Activated CD8-positive, alpha-beta memory T cell treated with anti-CD3 and anti-CD28 coated beads, Interleukin-2, amount 10 ng/mL, durations not matched to agents 7 days and 5 days (primary cell): ENCODE measurements at regions of chr15 and their contacts with region 1.

Region 1: GRCh38 chr15:89057504-89058133 is 30.6 kb upstream of the ABHD2 start:
- DNase-seq: peak; percentile 84
- ATAC-seq: peak; percentile 93
- H3K4me3 Mint-ChIP-seq: no peak overlapping the region
- H3K27ac Mint-ChIP-seq: no peak overlapping the region
- H3K4me1 Mint-ChIP-seq: peaks cover 6% of the 10 kb centered on the region
- H3K27me3 Mint-ChIP-seq: peaks cover 11% of the 10 kb centered on the region

Region 2: DNA sequence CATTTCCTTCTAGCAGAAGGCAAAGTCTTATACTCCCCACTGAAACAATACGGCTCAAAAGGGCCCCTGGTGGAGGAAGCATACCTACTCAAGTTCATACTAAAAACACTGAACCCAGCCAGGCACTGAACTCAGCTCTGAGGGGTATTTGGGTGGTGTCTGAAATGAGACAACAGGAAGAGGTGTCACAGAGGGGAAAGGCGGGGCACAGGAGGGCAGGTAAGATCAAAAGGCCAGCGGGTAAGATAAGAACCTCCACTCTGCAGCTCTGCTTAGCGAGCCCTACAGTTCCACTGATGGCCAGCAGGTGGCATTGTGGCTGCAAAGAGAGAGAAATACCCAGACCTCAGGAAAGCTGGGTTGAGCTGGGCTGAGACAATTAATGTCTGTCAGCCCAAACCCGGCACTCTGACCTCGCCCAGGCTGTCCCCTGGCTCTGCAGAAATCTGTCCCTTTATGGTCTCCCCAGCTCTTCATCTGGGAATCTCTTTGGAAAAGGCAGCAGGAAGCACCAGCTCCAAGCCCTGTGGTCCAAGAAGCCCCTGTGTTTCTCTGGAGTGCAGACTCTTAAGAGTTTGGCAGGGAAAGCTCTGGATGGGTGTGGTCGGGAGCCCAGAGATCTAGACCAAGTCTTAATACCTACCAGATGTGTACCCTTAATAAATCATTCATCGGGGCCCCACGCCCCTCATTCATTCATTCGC is 152.8 kb before region 1 on chr15:
- CTCF ChIA-PET with region 1: interaction called, 14 read pairs
- DNase-seq: peak; percentile 94
- ATAC-seq: peak; percentile 98
- H3K4me3 Mint-ChIP-seq: no peak overlapping the region
- H3K27ac Mint-ChIP-seq: peak overlapping the region; percentile 76
- H3K4me1 Mint-ChIP-seq: peaks cover 16% of the 10 kb centered on the region
- H3K27me3 Mint-ChIP-seq: no peaks in the 10 kb centered on the region

Region 3: GRCh38 chr15:89087830-89088604 is 30.4 kb after region 1 on chr15 and contains the start of gene ABHD2:
- CTCF ChIA-PET with region 1: interaction called, 32 read pairs
- DNase-seq: peak; percentile 99
- ATAC-seq: peak; percentile 99
- H3K4me3 Mint-ChIP-seq: no peak within 1 kb of the TSS
- H3K27ac Mint-ChIP-seq: no peak within 1 kb of the TSS
- H3K4me1 Mint-ChIP-seq: peaks cover 33% of the 10 kb centered on the region
- H3K27me3 Mint-ChIP-seq: no peaks in the 10 kb centered on the region
- total RNA-seq, gene ABHD2: 53.3 to 58.1 TPM

Region 4: DNA sequence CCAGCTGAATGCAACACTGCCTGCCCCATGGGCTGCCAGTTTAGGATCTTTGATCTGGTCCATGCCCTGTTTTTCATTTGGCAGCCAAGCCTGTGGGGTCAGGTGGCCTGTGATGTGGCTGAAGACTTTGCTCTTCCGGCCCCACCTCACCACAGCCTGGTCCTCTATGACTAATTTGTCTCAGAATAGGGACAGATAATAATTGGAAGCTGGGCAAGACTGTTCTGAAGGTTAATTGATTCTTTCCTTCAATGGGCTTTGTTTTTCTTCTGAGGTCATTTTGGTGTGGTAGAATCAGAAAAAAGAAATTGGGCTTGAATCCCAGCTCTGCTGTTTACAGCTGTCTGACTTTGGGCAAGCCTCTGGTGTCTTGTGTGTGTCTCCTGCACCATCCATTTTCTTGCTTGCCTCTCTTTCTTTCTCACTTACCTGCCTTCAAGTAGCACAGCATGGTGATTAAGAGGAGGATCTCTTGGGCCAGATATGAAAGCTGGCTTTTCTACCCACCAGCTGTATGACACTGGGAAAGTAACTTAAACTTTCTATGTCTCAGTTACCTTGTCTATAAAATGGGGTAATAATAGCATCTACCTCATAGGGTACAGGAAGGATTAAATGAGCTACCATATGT is 54.8 kb after region 1 on chr15:
- CTCF ChIA-PET with region 1: interaction called, 15 read pairs
- DNase-seq: peak; percentile 51
- ATAC-seq: peak; percentile 67
- H3K4me3 Mint-ChIP-seq: no peak overlapping the region
- H3K27ac Mint-ChIP-seq: peak overlapping the region; percentile 45
- H3K4me1 Mint-ChIP-seq: peaks cover 13% of the 10 kb centered on the region
- H3K27me3 Mint-ChIP-seq: no peaks in the 10 kb centered on the region

Region 5: DNA sequence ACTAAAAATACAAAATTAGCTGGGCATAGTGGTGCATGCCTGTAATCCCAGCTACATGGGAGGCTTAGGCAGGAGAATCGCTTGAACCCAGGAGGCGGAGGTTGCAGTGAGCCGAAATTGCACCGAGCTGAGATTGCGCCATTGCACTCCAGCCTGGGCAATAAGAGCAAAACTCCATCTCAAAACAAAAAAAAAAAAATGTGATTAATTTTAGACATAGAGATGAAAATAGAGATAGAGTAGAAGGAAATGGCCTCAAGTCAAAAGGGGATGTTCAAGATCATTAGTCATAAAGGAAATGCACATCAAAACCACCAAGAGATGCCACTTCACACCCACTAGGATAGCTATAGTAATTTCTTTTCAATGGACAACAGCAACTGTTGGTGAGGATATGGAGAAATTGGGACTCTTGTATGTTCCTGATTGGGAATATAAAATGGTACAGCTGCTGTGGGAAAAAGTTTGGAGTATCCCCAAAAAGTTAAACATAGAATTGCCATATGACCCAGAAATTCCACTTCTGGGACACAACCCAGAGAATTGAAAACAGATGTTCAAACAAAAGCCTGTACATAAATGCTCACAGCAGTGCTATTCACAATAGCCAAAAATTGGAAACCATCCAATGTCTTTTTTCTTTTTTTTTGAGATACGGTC is 86.0 kb after region 1 on chr15:
- CTCF ChIA-PET with region 1: interaction called, 14 read pairs
- DNase-seq: no peak
- ATAC-seq: peak; percentile 88
- H3K4me3 Mint-ChIP-seq: no peak overlapping the region
- H3K27ac Mint-ChIP-seq: peak overlapping the region; percentile 19
- H3K4me1 Mint-ChIP-seq: peaks cover 33% of the 10 kb centered on the region
- H3K27me3 Mint-ChIP-seq: no peaks in the 10 kb centered on the region

Region 6: GRCh38 chr15:89177633-89178306 is 120.2 kb after region 1 on chr15:
- CTCF ChIA-PET with region 1: interaction called, 193 read pairs
- DNase-seq: peak; percentile 78
- ATAC-seq: peak; percentile 55
- H3K4me3 Mint-ChIP-seq: no peak overlapping the region
- H3K27ac Mint-ChIP-seq: no peak overlapping the region
- H3K4me1 Mint-ChIP-seq: peaks cover 8% of the 10 kb centered on the region
- H3K27me3 Mint-ChIP-seq: no peaks in the 10 kb centered on the region

Region 7: GRCh38 chr15:89346516-89347231 is 289.1 kb after region 1 on chr15:
- CTCF ChIA-PET with region 1: no interaction called
- DNase-seq: no peak
- ATAC-seq: no peak
- H3K4me3 Mint-ChIP-seq: no peak overlapping the region
- H3K27ac Mint-ChIP-seq: no peak overlapping the region
- H3K4me1 Mint-ChIP-seq: peaks cover 8% of the 10 kb centered on the region
- H3K27me3 Mint-ChIP-seq: peaks cover 31% of the 10 kb centered on the region

Region 8: GRCh38 chr15:89485855-89486361 is 428.3 kb after region 1 on chr15:
- CTCF ChIA-PET with region 1: no interaction called
- DNase-seq: no peak
- ATAC-seq: peak; percentile 9
- H3K4me3 Mint-ChIP-seq: no peak overlapping the region
- H3K27ac Mint-ChIP-seq: no peak overlapping the region
- H3K4me1 Mint-ChIP-seq: peaks cover 4% of the 10 kb centered on the region
- H3K27me3 Mint-ChIP-seq: peaks cover 49% of the 10 kb centered on the region